MCF 10A (cell line): ENCODE measurements at regions of chr15 and their contacts with region 1.

Region 1: DNA sequence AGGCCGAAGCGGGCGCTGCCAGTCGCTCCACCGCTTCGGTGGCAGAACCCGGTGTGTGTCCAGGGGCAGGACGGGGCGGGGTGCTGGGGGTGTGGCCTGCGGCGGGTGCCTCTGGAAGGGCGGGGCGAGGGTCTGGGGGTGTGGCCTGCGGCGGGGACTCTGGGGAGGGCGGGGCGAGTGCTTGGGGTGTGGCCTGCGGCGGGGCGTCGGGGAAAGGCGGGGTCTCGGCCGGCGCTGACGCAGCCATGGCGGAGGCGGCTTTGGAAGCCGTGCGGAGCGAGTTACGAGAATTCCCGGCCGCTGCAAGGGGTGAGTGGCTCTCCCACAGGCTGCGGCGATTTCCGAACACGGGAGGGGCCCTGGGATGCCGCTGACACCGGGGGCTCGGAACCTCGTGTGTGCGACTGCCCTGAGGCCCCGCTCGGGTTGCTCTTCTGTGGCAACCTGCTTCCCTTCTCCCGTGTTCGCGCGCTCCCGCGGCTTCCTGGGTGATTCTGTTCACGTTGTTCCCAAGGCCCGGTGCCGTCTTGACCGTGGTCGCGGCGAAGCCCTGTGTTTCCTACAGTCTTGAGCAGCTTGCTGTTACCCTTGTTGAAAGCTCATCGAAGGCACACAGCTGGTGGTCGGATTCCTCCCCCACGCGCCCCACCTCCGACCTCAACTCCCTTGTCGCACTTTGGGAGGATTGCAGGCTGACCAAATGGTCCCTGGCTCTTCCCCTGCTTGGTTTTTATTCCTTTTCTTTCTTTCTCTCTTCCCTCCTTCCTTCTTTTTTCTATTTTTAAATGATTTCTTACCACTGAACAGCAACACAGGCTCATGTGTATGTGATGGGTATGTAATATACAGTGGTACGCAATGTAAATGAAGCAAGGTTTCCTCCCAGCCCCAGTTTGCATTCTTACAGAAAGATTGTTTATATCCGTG is at the start of gene JMJD7:
- DNase-seq: peak; percentile 85
- H3K4me3 Mint-ChIP-seq: peak within 1 kb of the TSS; percentile 87
- H3K27ac Mint-ChIP-seq: peak within 1 kb of the TSS; percentile 76
- H3K4me1 Mint-ChIP-seq: peaks cover 13% of the 10 kb centered on the region
- H3K27me3 Mint-ChIP-seq: no peaks in the 10 kb centered on the region
- CTCF ChIP-seq: no peak
- total RNA-seq, gene JMJD7: 9.2 and 13.3 TPM in 2 replicates

Region 2: DNA sequence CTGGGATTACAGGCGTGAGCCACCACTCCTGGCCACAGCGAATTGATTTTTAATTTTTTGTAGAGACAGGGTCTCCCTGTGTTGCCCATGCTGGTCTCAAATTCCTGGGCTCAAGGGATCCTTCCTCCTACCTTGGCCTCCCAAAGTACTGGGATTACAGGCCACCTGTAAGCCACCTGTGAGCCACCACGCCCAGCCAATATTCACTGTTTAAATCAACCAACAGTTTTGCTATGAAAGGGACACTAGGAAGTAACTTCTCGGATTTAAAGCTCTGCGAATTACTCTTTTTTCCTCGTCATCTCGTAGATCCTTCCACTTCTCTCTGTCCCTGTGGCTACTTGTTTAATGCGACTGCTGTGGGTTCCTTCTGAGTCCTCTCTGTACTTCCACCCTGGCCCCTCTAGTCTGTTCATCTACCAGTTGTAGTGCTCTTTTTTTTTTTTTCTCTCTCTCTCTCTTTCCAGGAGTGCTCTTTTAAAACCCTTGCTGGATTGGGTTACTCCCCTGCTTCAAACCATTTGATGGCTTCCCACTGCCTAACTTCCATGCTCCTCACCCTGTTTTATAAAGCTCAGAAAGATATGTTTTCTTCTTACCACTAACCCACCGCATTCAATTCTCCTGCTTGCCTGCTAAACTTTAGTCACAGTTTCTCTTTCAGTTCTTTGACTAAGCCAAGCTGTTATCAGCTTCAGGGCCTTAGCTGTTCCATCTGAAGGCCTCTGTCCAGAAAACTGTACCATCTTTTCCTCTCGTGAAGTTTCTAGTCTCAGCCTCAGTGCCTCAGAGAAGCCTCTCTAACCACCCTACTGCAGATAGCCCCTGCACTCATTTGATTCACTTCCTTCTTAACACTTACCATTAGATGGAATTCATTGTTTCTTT is 398.9 kb before region 1 on chr15:
- CTCF ChIA-PET with region 1: no interaction called
- POLR2A ChIA-PET with region 1: no interaction called
- intact Hi-C with region 1: no loop called
- DNase-seq: no peak
- H3K4me3 Mint-ChIP-seq: no peak overlapping the region
- H3K27ac Mint-ChIP-seq: no peak overlapping the region
- H3K4me1 Mint-ChIP-seq: peaks cover 13% of the 10 kb centered on the region
- H3K27me3 Mint-ChIP-seq: no peaks in the 10 kb centered on the region
- CTCF ChIP-seq: no peak

Region 3: DNA sequence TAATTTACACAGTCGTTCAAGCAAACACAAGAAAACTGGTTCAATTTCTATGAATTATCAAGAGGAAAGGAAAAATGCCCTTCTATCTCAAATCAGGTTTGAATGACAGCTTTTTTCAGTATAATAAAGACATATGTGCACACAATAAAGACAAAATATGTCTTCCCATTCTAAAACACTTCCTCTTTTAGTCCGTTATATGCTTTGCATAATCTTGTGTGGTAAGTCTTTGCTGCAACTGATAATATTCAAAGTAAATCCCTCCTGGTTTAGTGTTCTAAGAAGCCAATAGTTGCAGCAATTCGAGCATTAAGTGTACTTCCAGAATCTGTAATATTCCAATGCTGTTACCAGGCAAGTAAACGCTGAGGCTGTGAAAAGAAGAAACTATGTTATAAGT is 97.6 kb before region 1 on chr15:
- CTCF ChIA-PET with region 1: no interaction called
- POLR2A ChIA-PET with region 1: no interaction called
- intact Hi-C with region 1: no loop called
- DNase-seq: no peak
- H3K4me3 Mint-ChIP-seq: no peak overlapping the region
- H3K27ac Mint-ChIP-seq: no peak overlapping the region
- H3K4me1 Mint-ChIP-seq: no peaks in the 10 kb centered on the region
- H3K27me3 Mint-ChIP-seq: no peaks in the 10 kb centered on the region
- CTCF ChIP-seq: no peak

Region 4: DNA sequence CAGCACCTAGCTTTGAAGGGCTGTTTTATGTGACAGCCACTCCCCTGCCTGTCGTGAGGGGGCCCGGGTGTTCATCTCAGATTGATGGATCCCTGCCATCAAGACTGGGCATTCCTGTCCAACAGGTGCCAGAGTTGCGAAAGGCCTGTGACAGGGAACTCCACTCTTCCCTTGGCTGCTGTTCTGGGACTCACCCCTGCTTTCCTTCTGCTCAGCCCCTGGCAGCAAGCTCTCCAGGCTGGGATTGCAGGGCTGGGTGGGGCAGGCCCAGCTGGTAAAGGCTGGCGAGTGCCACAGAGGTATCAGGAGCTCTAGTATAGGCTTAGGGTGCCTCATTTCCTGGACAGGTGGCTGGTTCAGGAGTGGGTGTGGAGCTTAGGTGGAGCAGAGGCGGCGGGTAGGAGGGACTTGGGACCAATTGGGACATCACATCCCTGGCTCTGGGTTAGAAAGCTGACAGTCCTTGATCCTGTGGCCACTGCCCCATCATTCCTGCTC is 10.3 kb after region 1 on chr15 and contains the start of gene PLA2G4B:
- CTCF ChIA-PET with region 1: no interaction called
- POLR2A ChIA-PET with region 1: interaction called, 11 read pairs
- intact Hi-C with region 1: no loop called
- DNase-seq: peak; percentile 66
- H3K4me3 Mint-ChIP-seq: no peak within 1 kb of the TSS
- H3K27ac Mint-ChIP-seq: no peak within 1 kb of the TSS
- H3K4me1 Mint-ChIP-seq: peaks cover 6% of the 10 kb centered on the region
- H3K27me3 Mint-ChIP-seq: no peaks in the 10 kb centered on the region
- CTCF ChIP-seq: no peak
- total RNA-seq, gene PLA2G4B: 3.8 and 5.0 TPM in 2 replicates

Region 5: GRCh38 chr15:41904541-41905005 is 76.4 kb after region 1 on chr15:
- CTCF ChIA-PET with region 1: interaction called, 4 read pairs
- POLR2A ChIA-PET with region 1: interaction called, 5 read pairs
- intact Hi-C with region 1: loop called (anchors 5 kb)
- DNase-seq: peak; percentile 66
- H3K4me3 Mint-ChIP-seq: no peak overlapping the region
- H3K27ac Mint-ChIP-seq: peak overlapping the region; percentile 23
- H3K4me1 Mint-ChIP-seq: no peaks in the 10 kb centered on the region
- H3K27me3 Mint-ChIP-seq: no peaks in the 10 kb centered on the region
- CTCF ChIP-seq: peak; percentile 79